Dendritic cell treated with granulocyte-macrophage colony-stimulating factor and Interleukin-4, amounts not matched to agents 40 ng/mL and 50 ng/mL, for 4 days (primary cell): ENCODE measurements at regions of chr3 and their contacts with region 1.

Region 1: DNA sequence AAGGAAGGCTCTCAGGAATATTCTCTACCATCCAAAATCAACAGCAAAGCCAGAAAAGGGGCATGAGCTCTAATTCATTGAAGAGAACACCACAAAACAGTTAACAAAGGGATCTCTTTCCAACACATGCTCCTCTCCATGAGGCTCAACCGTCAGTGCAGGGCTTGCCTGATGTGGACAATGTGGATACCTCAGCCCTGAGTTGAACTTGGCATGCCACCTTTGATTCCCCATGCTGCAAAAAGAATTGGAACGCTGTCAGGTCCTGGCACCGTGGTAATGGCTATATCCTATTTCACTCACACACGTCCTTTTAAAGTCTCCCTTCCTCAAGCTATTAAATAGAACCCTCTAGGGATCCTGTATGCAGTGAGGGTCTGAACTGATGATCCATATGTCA is 30.7 kb upstream of the IP6K2 start:
- H3K4me3 Mint-ChIP-seq: peak overlapping the region; percentile 6
- H3K27ac Mint-ChIP-seq: peak overlapping the region; percentile 81
- H3K4me1 Mint-ChIP-seq: peaks cover 42% of the 10 kb centered on the region
- H3K27me3 Mint-ChIP-seq: no peaks in the 10 kb centered on the region

Region 2: DNA sequence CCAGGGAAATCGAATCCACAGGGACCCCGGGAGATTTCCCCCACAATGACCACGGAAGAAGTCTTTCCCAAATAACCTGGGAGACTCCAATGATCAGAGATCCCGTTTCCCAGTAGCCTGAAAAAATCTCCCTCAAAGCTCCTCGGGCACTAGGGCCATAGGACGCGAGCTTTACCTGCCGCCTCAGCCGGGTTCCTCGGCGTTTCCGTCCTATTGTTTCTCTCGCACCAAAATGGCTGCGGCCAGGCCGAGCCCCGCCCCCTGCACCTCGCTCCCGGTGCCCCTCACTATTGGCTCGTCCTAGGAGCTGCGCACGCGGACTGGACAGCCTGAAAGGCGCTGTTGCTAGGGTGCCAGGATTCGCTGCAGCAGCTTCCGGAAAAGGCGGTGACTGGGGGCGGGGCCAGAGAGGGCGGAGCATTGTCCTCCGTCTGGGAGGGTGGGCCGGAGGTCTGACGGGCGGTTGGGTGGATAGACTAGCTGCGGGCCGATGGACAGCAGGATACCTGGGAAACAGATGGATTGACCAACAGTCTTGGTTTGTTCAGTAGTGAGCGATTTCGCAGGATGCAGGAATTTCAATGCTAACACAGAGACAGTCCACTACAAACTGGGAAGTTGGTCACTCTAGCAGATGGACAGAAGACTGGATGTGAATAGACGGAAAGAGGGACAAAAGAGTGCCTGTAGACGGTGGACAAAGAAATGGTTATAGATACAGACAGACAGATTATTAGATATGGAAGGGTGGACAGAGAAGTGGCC is 30.5 kb before region 1 on chr3 and contains the start of gene IP6K2:
- intact Hi-C with region 1: loop called (anchors 2 kb)
- H3K4me3 Mint-ChIP-seq: peak within 1 kb of the TSS; percentile 93
- H3K27ac Mint-ChIP-seq: peak within 1 kb of the TSS; percentile 94
- H3K4me1 Mint-ChIP-seq: peaks cover 33% of the 10 kb centered on the region
- H3K27me3 Mint-ChIP-seq: peaks cover 6% of the 10 kb centered on the region